Activated naive CD4-positive, alpha-beta T cell treated with anti-CD3 and anti-CD28 coated beads for 36 hours (primary cell): ENCODE measurements at regions of chr17 and their contacts with region 1.

Region 1: GRCh38 chr17:8079291-8080207 is 8.0 kb downstream of the ALOX12B start:
- DNase-seq: peak; percentile 91
- H3K4me3 Mint-ChIP-seq: peak overlapping the region; percentile 95
- H3K27ac Mint-ChIP-seq: peak overlapping the region; percentile 88
- H3K4me1 Mint-ChIP-seq: peaks cover 13% of the 10 kb centered on the region
- H3K27me3 Mint-ChIP-seq: peaks cover 2% of the 10 kb centered on the region

Region 2: GRCh38 chr17:8091033-8091687 is 11.6 kb after region 1 on chr17:
- CTCF ChIA-PET with region 1: interaction called, 19 read pairs
- intact Hi-C with region 1: no loop called
- DNase-seq: no peak
- H3K4me3 Mint-ChIP-seq: no peak overlapping the region
- H3K27ac Mint-ChIP-seq: no peak overlapping the region
- H3K4me1 Mint-ChIP-seq: peaks cover 8% of the 10 kb centered on the region
- H3K27me3 Mint-ChIP-seq: peaks cover 15% of the 10 kb centered on the region

Region 3: DNA sequence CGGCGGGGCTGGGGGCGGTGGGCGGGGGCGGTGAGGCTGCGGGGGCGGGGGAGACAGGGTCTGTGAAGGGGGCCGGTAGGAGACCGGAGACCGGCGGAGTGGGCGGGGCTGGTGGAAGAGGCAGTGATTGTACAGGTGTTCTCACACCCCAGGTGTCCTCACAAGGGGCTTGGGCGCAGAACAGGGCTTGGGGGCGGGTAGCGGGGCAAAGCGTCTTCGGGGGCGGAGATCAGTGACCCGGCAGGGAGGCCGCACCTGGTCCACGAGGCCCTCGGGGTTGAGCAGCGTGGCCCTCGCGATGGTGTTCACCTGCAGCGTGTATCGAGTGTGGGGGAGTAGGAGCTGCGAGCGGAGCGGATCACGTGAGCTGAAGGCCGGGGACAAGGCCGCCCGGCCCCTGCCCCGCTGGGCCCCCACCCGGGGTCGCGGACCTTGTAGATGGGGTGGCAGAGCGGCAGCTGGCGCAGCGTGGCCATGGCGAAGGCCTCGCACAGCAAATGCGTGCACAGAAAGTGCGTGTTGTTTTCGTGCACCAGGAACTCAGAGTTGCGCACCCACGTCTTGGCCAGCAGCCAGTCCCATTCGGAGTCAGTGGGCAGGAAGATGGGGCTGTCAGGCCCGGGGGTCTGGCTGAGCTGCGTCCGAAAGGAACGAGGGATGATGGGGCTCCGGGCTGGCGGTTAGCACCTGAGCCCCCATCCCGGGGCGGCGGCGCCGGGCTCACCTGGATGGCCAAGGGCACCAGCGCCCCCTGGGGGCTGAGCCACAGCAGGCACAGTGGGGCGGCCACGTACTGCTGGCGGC is 30.3 kb after region 1 on chr17:
- CTCF ChIA-PET with region 1: interaction called, 20 read pairs
- intact Hi-C with region 1: loop called (anchors 1 kb)
- DNase-seq: peak; percentile 81
- H3K4me3 Mint-ChIP-seq: peak overlapping the region; percentile 34
- H3K27ac Mint-ChIP-seq: no peak overlapping the region
- H3K4me1 Mint-ChIP-seq: peaks cover 2% of the 10 kb centered on the region
- H3K27me3 Mint-ChIP-seq: peaks cover 6% of the 10 kb centered on the region

Region 4: DNA sequence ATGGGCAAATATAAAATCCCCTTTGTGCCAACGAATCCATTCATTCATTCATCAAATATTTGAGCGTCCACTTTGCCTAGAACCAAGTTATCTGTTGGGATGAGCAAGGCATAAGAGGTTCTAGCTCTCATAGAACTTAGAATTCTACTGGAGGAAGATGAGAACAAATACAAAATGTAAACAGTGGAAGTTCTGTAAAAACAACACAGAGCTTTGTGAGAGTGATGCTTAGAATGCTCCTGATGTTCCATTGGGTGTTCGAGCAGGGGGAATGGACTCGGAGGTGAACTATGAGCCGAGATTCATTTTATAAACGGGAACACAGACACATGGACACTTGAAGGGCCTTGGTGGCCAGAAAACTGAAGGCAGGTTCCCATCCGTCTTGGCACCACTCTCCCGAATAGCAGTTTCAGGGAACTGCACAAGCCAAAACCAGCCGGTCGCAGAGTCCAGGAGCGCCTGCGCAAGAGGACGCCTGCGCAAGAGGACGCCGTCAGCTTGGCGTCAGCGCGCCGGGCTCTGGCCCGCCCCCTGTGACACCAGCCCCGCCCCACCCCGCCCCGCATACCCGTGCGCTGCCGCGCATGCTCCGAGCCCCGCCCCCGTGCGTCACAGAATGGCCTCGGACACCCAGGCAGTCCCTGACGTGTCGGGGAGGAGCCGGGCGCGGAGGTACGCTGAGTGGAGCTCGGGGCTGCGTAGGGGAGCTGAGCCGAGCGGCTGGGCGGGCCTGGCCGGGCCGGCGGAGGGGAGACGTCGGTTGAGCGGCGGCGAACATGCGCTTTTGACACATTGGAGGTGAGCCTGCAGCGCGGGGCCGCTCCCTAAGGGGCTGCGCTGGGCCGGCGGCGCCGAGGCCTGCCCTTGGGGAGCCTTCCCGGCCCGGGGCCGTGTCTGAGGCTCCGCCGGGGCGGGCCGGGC is 356.0 kb after region 1 on chr17 and contains the start of gene NDEL1:
- CTCF ChIA-PET with region 1: no interaction called
- intact Hi-C with region 1: no loop called
- DNase-seq: peak; percentile 99
- H3K4me3 Mint-ChIP-seq: peak within 1 kb of the TSS; percentile 96
- H3K27ac Mint-ChIP-seq: peak within 1 kb of the TSS; percentile 93
- H3K4me1 Mint-ChIP-seq: peaks cover 32% of the 10 kb centered on the region
- H3K27me3 Mint-ChIP-seq: no peaks in the 10 kb centered on the region
- total RNA-seq, gene NDEL1: 43.1 to 47.1 TPM